Activated T-helper 1 cell treated with anti-CD3 and anti-CD28 coated beads, Interleukin-12 subunit alpha, Interleukin-12 subunit beta, Interleukin-2, Interleukin-4 antibody, amounts not matched to agents 30 ng/mL and 10 ng/mL and 1 ng/mL, durations not matched to agents 14 hours and 24 hours and 36 hours (primary cell): ENCODE measurements at regions of chr3 and their contacts with region 1.

Region 1: GRCh38 chr3:71305231-71306206 is 278.0 kb downstream of the FOXP1 start:
- DNase-seq: no peak
- H3K4me3 Mint-ChIP-seq: peak overlapping the region; percentile 87
- H3K27ac Mint-ChIP-seq: peak overlapping the region; percentile 63
- H3K4me1 Mint-ChIP-seq: peaks cover 79% of the 10 kb centered on the region
- H3K27me3 Mint-ChIP-seq: peaks cover 53% of the 10 kb centered on the region

Region 2: GRCh38 chr3:70550723-70551319 is 754.7 kb before region 1 on chr3:
- intact Hi-C with region 1: loop called (anchors 5 kb)
- DNase-seq: peak; percentile 34
- H3K4me3 Mint-ChIP-seq: no peak overlapping the region
- H3K27ac Mint-ChIP-seq: no peak overlapping the region
- H3K4me1 Mint-ChIP-seq: no peaks in the 10 kb centered on the region
- H3K27me3 Mint-ChIP-seq: peaks cover 17% of the 10 kb centered on the region

Region 3: GRCh38 chr3:71006810-71007785 is 298.4 kb before region 1 on chr3:
- intact Hi-C with region 1: loop called (anchors 1 kb)
- DNase-seq: no peak
- H3K4me3 Mint-ChIP-seq: no peak overlapping the region
- H3K27ac Mint-ChIP-seq: no peak overlapping the region
- H3K4me1 Mint-ChIP-seq: peaks cover 59% of the 10 kb centered on the region
- H3K27me3 Mint-ChIP-seq: no peaks in the 10 kb centered on the region

Region 4: DNA sequence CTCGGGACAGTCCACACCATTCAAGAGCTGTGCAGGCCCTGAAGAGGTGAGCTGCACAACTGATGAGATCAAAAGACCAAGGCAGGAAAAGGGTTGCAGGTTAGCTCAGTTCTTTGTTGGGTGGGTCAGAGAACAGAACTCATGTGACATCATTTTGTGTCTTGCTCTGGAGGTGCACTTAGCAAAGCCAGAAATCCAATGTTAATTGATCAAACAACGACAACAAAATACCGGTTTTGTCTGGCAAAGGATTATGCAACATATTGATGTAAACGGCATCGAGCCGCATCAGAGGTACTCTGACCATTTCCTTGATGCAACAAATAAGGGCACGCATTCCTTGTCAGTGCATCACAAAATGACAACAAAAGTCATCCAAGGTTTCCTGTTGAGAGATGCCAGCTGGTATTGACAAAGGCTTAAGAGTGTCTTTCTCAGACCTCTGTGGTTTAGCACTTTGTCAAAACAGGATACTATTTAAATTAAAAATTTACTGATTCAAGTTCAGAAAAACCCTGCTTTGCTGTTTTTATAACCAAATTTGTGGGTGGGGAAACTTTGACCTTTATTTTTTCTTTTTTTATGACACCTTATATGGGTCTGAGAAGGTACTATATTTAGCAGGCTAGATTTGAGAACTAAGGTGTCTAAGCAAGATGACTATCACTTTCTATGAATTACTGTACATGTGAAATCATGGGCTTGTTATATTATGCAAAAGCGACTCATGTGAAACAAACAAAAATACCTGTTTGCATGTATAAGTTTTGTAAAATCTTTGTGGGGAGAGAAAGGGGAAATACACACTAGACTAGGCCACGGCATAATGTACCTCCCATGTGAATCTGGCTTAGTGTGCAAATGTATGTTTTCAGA is 218.1 kb before region 1 on chr3:
- intact Hi-C with region 1: loop called (anchors 1 kb)
- DNase-seq: peak; percentile 44
- H3K4me3 Mint-ChIP-seq: peak overlapping the region; percentile 46
- H3K27ac Mint-ChIP-seq: peak overlapping the region; percentile 89
- H3K4me1 Mint-ChIP-seq: peaks cover 77% of the 10 kb centered on the region
- H3K27me3 Mint-ChIP-seq: peaks cover 2% of the 10 kb centered on the region

Region 5: GRCh38 chr3:71195492-71195891 is 110.0 kb before region 1 on chr3:
- intact Hi-C with region 1: loop called (anchors 1 kb)
- DNase-seq: no peak
- H3K4me3 Mint-ChIP-seq: no peak overlapping the region
- H3K27ac Mint-ChIP-seq: no peak overlapping the region
- H3K4me1 Mint-ChIP-seq: peaks cover 18% of the 10 kb centered on the region
- H3K27me3 Mint-ChIP-seq: peaks cover 5% of the 10 kb centered on the region

Region 6: DNA sequence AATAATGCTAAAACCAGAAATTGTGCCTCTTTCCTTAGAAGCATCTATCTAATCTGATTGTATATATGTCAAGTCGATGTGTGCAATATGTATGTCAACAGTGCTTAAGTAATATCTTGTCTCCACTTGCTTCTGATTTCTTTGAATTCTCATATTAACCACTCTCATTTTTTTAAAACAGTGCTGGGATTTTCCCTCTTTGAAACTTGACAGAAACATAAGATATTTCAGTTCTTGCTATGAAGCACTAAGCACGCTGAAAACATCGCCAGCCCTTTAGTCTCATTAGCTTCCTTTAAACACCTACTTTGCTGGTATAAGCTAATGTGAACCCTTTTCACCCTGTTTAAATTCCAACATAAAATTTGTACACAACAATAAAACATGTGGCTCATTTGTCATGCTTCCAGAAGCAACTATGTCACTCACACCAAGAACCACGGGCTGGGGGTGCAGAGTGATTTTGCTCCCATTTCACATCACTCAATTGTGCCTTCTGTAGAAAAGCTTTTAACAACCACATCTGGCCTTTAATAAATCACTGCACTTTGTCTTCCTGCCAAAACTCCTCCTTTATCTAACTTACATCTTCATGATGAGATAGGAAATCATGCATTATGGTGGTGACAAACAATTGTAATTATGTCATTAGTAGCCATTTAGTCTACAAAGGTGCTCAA is 92.8 kb after region 1 on chr3:
- intact Hi-C with region 1: loop called (anchors 1 kb)
- DNase-seq: no peak
- H3K4me3 Mint-ChIP-seq: no peak overlapping the region
- H3K27ac Mint-ChIP-seq: no peak overlapping the region
- H3K4me1 Mint-ChIP-seq: peaks cover 17% of the 10 kb centered on the region
- H3K27me3 Mint-ChIP-seq: peaks cover 43% of the 10 kb centered on the region

Region 7: DNA sequence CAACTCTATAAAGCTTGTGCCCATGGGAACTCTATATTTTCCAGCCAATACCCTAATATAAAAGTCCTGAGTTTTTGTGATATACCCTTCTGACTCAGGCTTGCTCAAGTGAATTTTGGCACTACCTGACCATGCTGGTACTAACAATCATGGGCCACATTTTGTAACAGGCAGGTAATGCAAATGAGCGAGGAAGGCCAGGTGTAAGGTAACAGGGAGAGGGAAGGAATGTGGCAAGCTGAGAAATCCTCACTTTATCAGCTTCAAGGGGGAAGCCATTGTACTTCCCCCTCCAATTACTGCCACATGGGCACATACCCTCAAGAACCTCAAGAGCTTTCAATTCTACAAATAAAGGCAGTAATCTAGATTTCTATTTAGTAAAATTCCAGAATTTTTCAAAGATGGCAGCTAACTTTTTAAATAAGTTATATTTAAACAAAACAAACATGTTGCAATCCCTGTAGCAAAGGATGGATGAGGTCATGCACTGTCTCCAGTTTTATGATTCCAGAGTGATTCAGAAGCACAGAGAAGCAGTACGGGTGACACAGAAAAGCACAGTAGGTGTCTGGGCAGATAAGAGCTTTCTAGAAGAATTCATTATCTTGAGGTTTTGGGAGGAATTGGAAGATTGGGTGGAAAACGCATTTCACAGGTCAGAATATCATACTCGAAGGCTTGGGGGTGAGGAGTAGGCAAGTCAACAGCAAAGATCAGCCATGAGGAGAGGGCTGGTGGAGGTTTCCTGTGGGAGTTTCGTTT is 190.4 kb after region 1 on chr3:
- intact Hi-C with region 1: loop called (anchors 2 kb)
- DNase-seq: peak; percentile 4
- H3K4me3 Mint-ChIP-seq: peak overlapping the region; percentile 22
- H3K27ac Mint-ChIP-seq: peak overlapping the region; percentile 40
- H3K4me1 Mint-ChIP-seq: peaks cover 57% of the 10 kb centered on the region
- H3K27me3 Mint-ChIP-seq: peaks cover 6% of the 10 kb centered on the region